Activated CD8-positive, alpha-beta T cell treated with anti-CD3 and anti-CD28 coated beads, Interleukin-2, amount 10 ng/mL, durations not matched to agents 7 days and 5 days (primary cell): ENCODE measurements at regions of chr22 and their contacts with region 1.

Region 1: GRCh38 chr22:41966607-41967240 is 2.5 kb upstream of the SEPTIN3 start:
- DNase-seq: peak; percentile 57
- ATAC-seq: peak; percentile 62
- H3K4me3 Mint-ChIP-seq: no peak overlapping the region
- H3K27ac Mint-ChIP-seq: no peak overlapping the region
- H3K4me1 Mint-ChIP-seq: no peaks in the 10 kb centered on the region
- H3K27me3 Mint-ChIP-seq: peaks cover 2% of the 10 kb centered on the region

Region 2: GRCh38 chr22:42079319-42080251 is 112.9 kb after region 1 on chr22 and contains the start of gene SMDT1:
- CTCF ChIA-PET with region 1: interaction called, 12 read pairs
- POLR2A ChIA-PET with region 1: no interaction called
- DNase-seq: peak; percentile 99
- ATAC-seq: peak; percentile 95
- H3K4me3 Mint-ChIP-seq: peak within 1 kb of the TSS; percentile 92
- H3K27ac Mint-ChIP-seq: peak within 1 kb of the TSS; percentile 92
- H3K4me1 Mint-ChIP-seq: peaks cover 38% of the 10 kb centered on the region
- H3K27me3 Mint-ChIP-seq: no peaks in the 10 kb centered on the region
- total RNA-seq, gene SMDT1: 77.2 to 78.2 TPM

Region 3: GRCh38 chr22:42111798-42112197 is 145.1 kb after region 1 on chr22:
- CTCF ChIA-PET with region 1: interaction called, 12 read pairs
- POLR2A ChIA-PET with region 1: no interaction called
- DNase-seq: no peak
- ATAC-seq: no peak
- H3K4me3 Mint-ChIP-seq: no peak overlapping the region
- H3K27ac Mint-ChIP-seq: no peak overlapping the region
- H3K4me1 Mint-ChIP-seq: peaks cover 2% of the 10 kb centered on the region
- H3K27me3 Mint-ChIP-seq: no peaks in the 10 kb centered on the region

Region 4: GRCh38 chr22:42116848-42117424 is 150.2 kb after region 1 on chr22:
- CTCF ChIA-PET with region 1: interaction called, 12 read pairs
- POLR2A ChIA-PET with region 1: no interaction called
- DNase-seq: no peak
- ATAC-seq: no peak
- H3K4me3 Mint-ChIP-seq: no peak overlapping the region
- H3K27ac Mint-ChIP-seq: no peak overlapping the region
- H3K4me1 Mint-ChIP-seq: peaks cover 35% of the 10 kb centered on the region
- H3K27me3 Mint-ChIP-seq: no peaks in the 10 kb centered on the region

Region 5: GRCh38 chr22:42261296-42261695 is 294.6 kb after region 1 on chr22:
- CTCF ChIA-PET with region 1: no interaction called
- POLR2A ChIA-PET with region 1: no interaction called
- DNase-seq: no peak
- ATAC-seq: no peak
- H3K4me3 Mint-ChIP-seq: no peak overlapping the region
- H3K27ac Mint-ChIP-seq: no peak overlapping the region
- H3K4me1 Mint-ChIP-seq: peaks cover 60% of the 10 kb centered on the region
- H3K27me3 Mint-ChIP-seq: no peaks in the 10 kb centered on the region